ENCODE measurements at regions of chr6 and their contacts with region 1.

Region 1: GRCh38 chr6:20542927-20543602 is 8.8 kb downstream of the CDKAL1 start:
- DNase-seq: peak; percentile 31
- H3K4me3 Mint-ChIP-seq: peak overlapping the region; percentile 59
- H3K27ac Mint-ChIP-seq: peak overlapping the region; percentile 88
- H3K4me1 Mint-ChIP-seq: peaks cover 56% of the 10 kb centered on the region
- H3K27me3 Mint-ChIP-seq: no peaks in the 10 kb centered on the region

Region 2: DNA sequence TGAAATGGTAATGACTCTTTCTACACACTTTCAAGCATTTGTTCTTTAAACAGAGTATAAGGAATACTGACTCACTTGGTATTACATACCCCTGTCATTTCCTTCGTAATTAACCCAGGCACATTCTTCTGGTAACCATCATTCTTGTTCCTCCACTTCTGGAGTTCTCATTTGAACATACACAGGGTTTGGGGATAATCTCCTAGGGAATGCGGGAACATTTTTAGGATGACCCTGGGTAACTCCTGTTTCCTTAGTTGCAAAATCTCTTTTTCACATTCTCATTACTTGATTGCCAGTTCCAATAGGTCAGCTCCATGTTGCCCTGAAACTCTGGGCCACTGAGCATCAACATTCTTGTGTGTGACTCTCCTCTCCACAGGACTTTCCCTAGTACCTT is 192.8 kb before region 1 on chr6:
- intact Hi-C with region 1: no loop called
- DNase-seq: no peak
- H3K4me3 Mint-ChIP-seq: no peak overlapping the region
- H3K27ac Mint-ChIP-seq: no peak overlapping the region
- H3K4me1 Mint-ChIP-seq: peaks cover 40% of the 10 kb centered on the region
- H3K27me3 Mint-ChIP-seq: no peaks in the 10 kb centered on the region

Region 3: GRCh38 chr6:20582586-20583446 is 39.8 kb after region 1 on chr6:
- intact Hi-C with region 1: loop called (anchors 2 kb)
- DNase-seq: no peak
- H3K4me3 Mint-ChIP-seq: no peak overlapping the region
- H3K27ac Mint-ChIP-seq: no peak overlapping the region
- H3K4me1 Mint-ChIP-seq: peaks cover 36% of the 10 kb centered on the region
- H3K27me3 Mint-ChIP-seq: no peaks in the 10 kb centered on the region

Region 4: GRCh38 chr6:21164768-21165326 is 621.8 kb after region 1 on chr6:
- intact Hi-C with region 1: loop called (anchors 10 kb)
- DNase-seq: no peak
- H3K4me3 Mint-ChIP-seq: no peak overlapping the region
- H3K27ac Mint-ChIP-seq: peak overlapping the region; percentile 44
- H3K4me1 Mint-ChIP-seq: peaks cover 34% of the 10 kb centered on the region
- H3K27me3 Mint-ChIP-seq: no peaks in the 10 kb centered on the region

Region 5: DNA sequence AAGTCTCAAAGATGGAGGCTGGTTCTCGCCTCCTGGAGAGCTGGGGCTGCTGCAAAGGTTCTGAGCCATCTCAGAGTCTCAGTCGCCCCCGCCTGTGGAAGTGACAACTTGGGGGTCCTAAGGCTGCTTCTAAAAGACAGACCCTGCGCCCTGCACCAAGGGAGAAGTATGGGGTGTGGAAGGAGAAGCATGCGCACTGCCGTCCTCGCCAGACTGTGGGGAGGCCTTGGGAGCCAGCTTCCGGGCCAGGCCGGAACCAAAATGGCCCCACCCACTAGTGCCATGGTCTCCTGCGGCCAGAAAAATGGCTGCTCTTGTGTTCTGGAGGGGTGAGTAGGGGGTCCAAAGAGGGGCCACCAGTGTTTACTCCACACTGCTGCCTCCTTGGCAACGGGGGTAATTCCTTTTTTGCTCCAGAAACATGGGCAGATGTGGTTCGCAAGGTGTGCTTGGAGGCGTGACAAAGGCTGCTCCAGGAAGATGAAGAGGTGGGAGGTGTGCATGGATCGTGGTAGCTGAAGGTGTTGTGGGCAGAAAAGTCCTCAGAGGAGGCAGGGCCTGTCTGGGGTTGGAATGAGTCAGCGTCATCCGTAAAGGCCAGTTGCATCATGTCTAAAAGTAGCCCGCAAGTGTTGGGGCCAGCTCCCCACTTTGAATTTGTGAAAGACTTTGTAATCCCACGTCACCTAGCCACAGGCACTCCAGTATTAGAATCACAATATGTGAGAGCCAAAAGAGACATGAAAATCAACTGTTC is 720.6 kb after region 1 on chr6:
- intact Hi-C with region 1: loop called (anchors 10 kb)
- DNase-seq: no peak
- H3K4me3 Mint-ChIP-seq: no peak overlapping the region
- H3K27ac Mint-ChIP-seq: no peak overlapping the region
- H3K4me1 Mint-ChIP-seq: peaks cover 26% of the 10 kb centered on the region
- H3K27me3 Mint-ChIP-seq: no peaks in the 10 kb centered on the region

Region 6: DNA sequence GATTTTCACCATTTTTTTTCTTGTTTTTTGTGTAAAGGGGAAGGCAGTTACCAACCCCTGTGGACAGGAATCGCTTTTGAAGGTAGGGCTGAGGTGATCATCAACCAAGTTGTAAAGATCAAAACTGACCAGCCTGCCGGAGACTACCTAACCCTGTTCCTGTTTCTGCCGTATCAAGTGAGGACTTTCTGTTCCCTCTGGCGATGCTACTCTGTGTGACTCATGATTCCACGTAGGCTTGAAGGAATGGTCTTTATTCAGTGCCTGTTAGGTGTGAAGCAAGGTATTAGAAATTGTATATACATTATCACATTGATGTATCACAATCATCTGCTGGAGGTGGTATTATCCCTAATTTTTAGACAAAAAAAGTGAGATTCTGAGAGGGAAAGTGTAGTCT is 1211.8 kb after region 1 on chr6:
- intact Hi-C with region 1: loop called (anchors 5 kb)
- DNase-seq: no peak
- H3K4me3 Mint-ChIP-seq: no peak overlapping the region
- H3K27ac Mint-ChIP-seq: no peak overlapping the region
- H3K4me1 Mint-ChIP-seq: peaks cover 14% of the 10 kb centered on the region
- H3K27me3 Mint-ChIP-seq: no peaks in the 10 kb centered on the region